ENCODE measurements at regions of chr18 and their contacts with region 1.

Region 1: DNA sequence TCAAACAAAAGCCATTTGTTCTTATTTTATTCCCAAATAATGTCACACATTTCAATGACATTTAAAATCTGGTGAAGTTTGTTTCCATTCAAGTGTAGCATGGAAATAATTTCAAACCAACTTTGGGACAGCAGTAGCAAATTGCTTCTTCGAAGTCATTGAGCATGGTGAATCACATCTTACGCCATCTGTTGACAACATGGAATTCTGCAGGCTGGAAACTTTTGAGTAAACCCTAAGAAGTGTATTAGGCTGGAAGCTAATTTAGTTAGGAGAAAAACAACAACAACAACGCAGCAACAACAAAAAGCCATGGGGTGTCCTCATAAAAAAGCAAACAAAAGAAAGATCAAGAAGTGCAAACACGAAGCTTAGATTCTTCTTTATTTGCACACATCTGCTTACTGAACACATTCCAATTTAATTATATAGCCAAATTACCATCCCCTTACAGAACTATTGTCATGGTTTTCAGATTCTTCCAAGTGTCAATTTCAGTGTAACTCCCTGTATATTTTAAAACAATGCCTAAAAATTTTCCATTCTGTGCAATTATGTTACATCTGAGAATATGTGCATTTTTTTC is 659.0 kb upstream of the CDH7 start:
- DNase-seq: no peak
- ATAC-seq: no peak
- H3K4me3 Mint-ChIP-seq: no peak overlapping the region
- H3K27ac Mint-ChIP-seq: no peak overlapping the region
- H3K4me1 Mint-ChIP-seq: no peaks in the 10 kb centered on the region
- H3K27me3 Mint-ChIP-seq: no peaks in the 10 kb centered on the region
- CTCF ChIP-seq: no peak

Region 2: DNA sequence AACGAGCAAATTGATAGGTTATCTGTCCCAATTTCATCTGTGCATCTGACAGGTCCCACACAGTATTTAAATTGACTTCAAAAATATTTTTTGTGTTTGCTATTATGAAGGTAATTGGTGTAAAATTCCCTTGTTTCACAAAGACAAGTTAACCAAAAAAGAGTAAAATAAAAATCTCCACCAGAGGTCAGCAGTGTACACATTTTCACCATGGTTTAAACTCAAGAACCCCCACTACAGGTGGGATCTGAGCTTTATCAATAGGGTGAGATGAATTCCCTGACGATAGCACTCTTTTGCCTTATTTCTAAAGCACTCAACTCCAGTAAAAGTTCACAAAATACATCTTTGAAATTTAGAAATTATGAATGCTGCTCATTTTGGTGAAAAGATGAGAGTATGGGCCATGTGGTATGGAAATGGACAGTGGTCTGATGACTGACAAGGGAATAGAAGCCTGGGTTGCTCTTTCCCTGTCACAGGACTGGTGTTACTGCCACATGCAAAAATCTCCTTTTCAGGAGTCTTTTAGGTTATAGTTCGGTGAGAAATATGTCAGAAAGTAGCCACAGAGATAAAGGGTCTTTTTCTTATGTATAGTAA is 1053.9 kb before region 1 on chr18:
- CTCF ChIA-PET with region 1: no interaction called
- POLR2A ChIA-PET with region 1: no interaction called
- intact Hi-C with region 1: loop called (anchors 2 kb)
- DNase-seq: no peak
- ATAC-seq: peak; percentile 56
- H3K4me3 Mint-ChIP-seq: no peak overlapping the region
- H3K27ac Mint-ChIP-seq: no peak overlapping the region
- H3K4me1 Mint-ChIP-seq: no peaks in the 10 kb centered on the region
- H3K27me3 Mint-ChIP-seq: peaks cover 2% of the 10 kb centered on the region
- CTCF ChIP-seq: no peak

Region 3: DNA sequence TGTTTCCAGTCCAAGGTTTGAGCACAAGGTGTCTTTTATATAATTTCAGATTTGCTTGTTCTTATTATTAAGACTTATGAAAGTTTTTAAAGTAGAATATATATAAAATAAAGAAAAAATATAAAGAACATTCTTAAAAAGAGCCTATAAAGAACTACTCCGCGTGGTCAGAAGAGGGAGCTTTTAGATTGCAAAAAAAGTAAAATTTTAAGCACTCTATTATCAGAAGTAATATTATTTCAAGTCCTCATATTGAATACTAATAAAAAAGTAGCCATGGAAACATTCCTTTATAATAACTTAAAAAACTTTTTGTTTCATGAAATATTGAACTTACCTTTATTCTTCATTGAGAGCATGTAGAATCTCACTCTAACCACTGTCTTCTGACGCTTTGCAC is 994.3 kb before region 1 on chr18:
- CTCF ChIA-PET with region 1: no interaction called
- POLR2A ChIA-PET with region 1: no interaction called
- intact Hi-C with region 1: loop called (anchors 5 kb)
- DNase-seq: no peak
- ATAC-seq: no peak
- H3K4me3 Mint-ChIP-seq: no peak overlapping the region
- H3K27ac Mint-ChIP-seq: no peak overlapping the region
- H3K4me1 Mint-ChIP-seq: peaks cover 3% of the 10 kb centered on the region
- H3K27me3 Mint-ChIP-seq: peaks cover 6% of the 10 kb centered on the region
- CTCF ChIP-seq: no peak

Measured in activated B cell treated with CpG ODN at 0.5 μM for 24 hours (primary cell).